CD14-positive monocyte (primary cell): ENCODE measurements at regions of chr4 and their contacts with region 1.

Region 1: GRCh38 chr4:26459054-26459755 is 31.1 kb downstream of the CCKAR start:
- DNase-seq: peak in 2 of 3 donors; percentile 6 to 12
- H3K4me3 ChIP-seq: no peak overlapping the region
- H3K4me3 Mint-ChIP-seq: peak overlapping the region in 1 of 2 donors; percentile 53
- H3K27ac ChIP-seq: no peak overlapping the region
- H3K27ac Mint-ChIP-seq: no peak overlapping the region
- H3K4me1 ChIP-seq: no peaks in the 10 kb centered on the region
- H3K4me1 Mint-ChIP-seq: peaks cover 12% of the 10 kb centered on the region
- H3K27me3 ChIP-seq: no peaks in the 10 kb centered on the region
- H3K27me3 Mint-ChIP-seq: peaks cover 2 to 5% (median 2%) of the 10 kb centered on the region in 3 donors
- CTCF ChIP-seq: peak; percentile 67

Region 2: GRCh38 chr4:26719954-26720552 is 260.8 kb after region 1 on chr4:
- intact Hi-C with region 1: no loop called
- DNase-seq: no peak
- H3K4me3 ChIP-seq: no peak overlapping the region
- H3K4me3 Mint-ChIP-seq: no peak overlapping the region
- H3K27ac ChIP-seq: no peak overlapping the region
- H3K27ac Mint-ChIP-seq: no peak overlapping the region
- H3K4me1 ChIP-seq: no peaks in the 10 kb centered on the region
- H3K4me1 Mint-ChIP-seq: peaks cover 7% of the 10 kb centered on the region
- H3K27me3 ChIP-seq: no peaks in the 10 kb centered on the region
- H3K27me3 Mint-ChIP-seq: peaks cover 0 to 2% (median 0%) of the 10 kb centered on the region in 3 donors
- CTCF ChIP-seq: peak; percentile 45

Region 3: DNA sequence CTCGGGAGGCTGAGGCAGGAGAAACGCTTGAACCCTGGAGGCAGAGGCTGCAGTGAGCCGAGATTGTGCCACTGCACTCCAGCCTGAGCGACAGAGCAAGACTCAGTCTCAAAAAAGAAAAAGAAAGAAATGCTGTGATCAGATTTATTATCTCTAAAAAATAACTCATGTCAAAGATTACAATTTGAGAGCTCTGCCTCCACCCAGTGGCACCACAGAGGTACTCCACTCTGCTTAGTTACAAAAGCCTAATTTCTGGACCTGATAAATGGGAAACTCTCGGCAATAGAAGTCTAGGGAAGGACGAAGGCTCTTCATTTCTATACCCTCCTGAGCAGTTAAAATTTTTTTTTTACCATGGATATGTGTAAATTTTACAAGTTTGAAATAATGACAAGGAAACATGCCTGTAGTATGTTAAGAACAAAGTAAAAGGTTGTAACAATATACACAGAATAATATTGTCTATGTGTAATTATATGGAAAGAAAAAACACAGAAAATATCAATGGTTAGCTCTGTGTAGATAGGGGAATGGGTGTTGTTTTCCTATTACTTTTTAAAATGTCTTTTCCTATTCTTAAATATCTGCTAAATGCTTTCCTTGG is 551.2 kb after region 1 on chr4:
- intact Hi-C with region 1: loop called (anchors 10 kb)
- DNase-seq: peak; percentile 18 to 50 (median 38)
- H3K4me3 ChIP-seq: no peak overlapping the region
- H3K4me3 Mint-ChIP-seq: no peak overlapping the region
- H3K27ac ChIP-seq: no peak overlapping the region
- H3K27ac Mint-ChIP-seq: peak overlapping the region in 2 of 7 donors; percentile 36 to 41
- H3K4me1 ChIP-seq: no peaks in the 10 kb centered on the region
- H3K4me1 Mint-ChIP-seq: no peaks in the 10 kb centered on the region
- H3K27me3 ChIP-seq: no peaks in the 10 kb centered on the region
- H3K27me3 Mint-ChIP-seq: no peaks in the 10 kb centered on the region
- CTCF ChIP-seq: peak; percentile 95